Activated B cell treated with CpG ODN at 0.5 μM for 24 hours (primary cell): ENCODE measurements at regions of chr3 and their contacts with region 1.

Region 1: GRCh38 chr3:30042274-30042859 is 564.0 kb upstream of the TGFBR2 start:
- DNase-seq: no peak
- ATAC-seq: no peak
- H3K4me3 Mint-ChIP-seq: no peak overlapping the region
- H3K27ac Mint-ChIP-seq: no peak overlapping the region
- H3K4me1 Mint-ChIP-seq: no peaks in the 10 kb centered on the region
- H3K27me3 Mint-ChIP-seq: peaks cover 7% of the 10 kb centered on the region
- CTCF ChIP-seq: no peak

Region 2: GRCh38 chr3:30199096-30199759 is 156.9 kb after region 1 on chr3:
- CTCF ChIA-PET with region 1: interaction called, 61 read pairs
- POLR2A ChIA-PET with region 1: no interaction called
- intact Hi-C with region 1: loop called (anchors 1 kb)
- DNase-seq: peak; percentile 16
- ATAC-seq: peak; percentile 31
- H3K4me3 Mint-ChIP-seq: no peak overlapping the region
- H3K27ac Mint-ChIP-seq: no peak overlapping the region
- H3K4me1 Mint-ChIP-seq: peaks cover 12% of the 10 kb centered on the region
- H3K27me3 Mint-ChIP-seq: no peaks in the 10 kb centered on the region
- CTCF ChIP-seq: peak; percentile 73

Region 3: GRCh38 chr3:30628901-30629590 is 586.7 kb after region 1 on chr3:
- CTCF ChIA-PET with region 1: no interaction called
- POLR2A ChIA-PET with region 1: no interaction called
- intact Hi-C with region 1: loop called (anchors 5 kb)
- DNase-seq: no peak
- ATAC-seq: peak; percentile 52
- H3K4me3 Mint-ChIP-seq: peak overlapping the region; percentile 49
- H3K27ac Mint-ChIP-seq: peak overlapping the region; percentile 91
- H3K4me1 Mint-ChIP-seq: peaks cover 94% of the 10 kb centered on the region
- H3K27me3 Mint-ChIP-seq: no peaks in the 10 kb centered on the region
- CTCF ChIP-seq: no peak

Region 4: GRCh38 chr3:30768703-30769685 is 726.6 kb after region 1 on chr3:
- CTCF ChIA-PET with region 1: interaction called, 10 read pairs
- POLR2A ChIA-PET with region 1: no interaction called
- intact Hi-C with region 1: loop called (anchors 1 kb)
- DNase-seq: peak; percentile 27
- ATAC-seq: no peak
- H3K4me3 Mint-ChIP-seq: no peak overlapping the region
- H3K27ac Mint-ChIP-seq: no peak overlapping the region
- H3K4me1 Mint-ChIP-seq: no peaks in the 10 kb centered on the region
- H3K27me3 Mint-ChIP-seq: peaks cover 14% of the 10 kb centered on the region
- CTCF ChIP-seq: no peak

Region 5: GRCh38 chr3:31768479-31769123 is 1726.2 kb after region 1 on chr3:
- CTCF ChIA-PET with region 1: interaction called, 5 read pairs
- POLR2A ChIA-PET with region 1: no interaction called
- intact Hi-C with region 1: loop called (anchors 2 kb)
- DNase-seq: no peak
- ATAC-seq: no peak
- H3K4me3 Mint-ChIP-seq: no peak overlapping the region
- H3K27ac Mint-ChIP-seq: peak overlapping the region; percentile 37
- H3K4me1 Mint-ChIP-seq: peaks cover 68% of the 10 kb centered on the region
- H3K27me3 Mint-ChIP-seq: no peaks in the 10 kb centered on the region
- CTCF ChIP-seq: no peak